ENCODE measurements at regions of chr2 and their contacts with region 1.

Region 1: DNA sequence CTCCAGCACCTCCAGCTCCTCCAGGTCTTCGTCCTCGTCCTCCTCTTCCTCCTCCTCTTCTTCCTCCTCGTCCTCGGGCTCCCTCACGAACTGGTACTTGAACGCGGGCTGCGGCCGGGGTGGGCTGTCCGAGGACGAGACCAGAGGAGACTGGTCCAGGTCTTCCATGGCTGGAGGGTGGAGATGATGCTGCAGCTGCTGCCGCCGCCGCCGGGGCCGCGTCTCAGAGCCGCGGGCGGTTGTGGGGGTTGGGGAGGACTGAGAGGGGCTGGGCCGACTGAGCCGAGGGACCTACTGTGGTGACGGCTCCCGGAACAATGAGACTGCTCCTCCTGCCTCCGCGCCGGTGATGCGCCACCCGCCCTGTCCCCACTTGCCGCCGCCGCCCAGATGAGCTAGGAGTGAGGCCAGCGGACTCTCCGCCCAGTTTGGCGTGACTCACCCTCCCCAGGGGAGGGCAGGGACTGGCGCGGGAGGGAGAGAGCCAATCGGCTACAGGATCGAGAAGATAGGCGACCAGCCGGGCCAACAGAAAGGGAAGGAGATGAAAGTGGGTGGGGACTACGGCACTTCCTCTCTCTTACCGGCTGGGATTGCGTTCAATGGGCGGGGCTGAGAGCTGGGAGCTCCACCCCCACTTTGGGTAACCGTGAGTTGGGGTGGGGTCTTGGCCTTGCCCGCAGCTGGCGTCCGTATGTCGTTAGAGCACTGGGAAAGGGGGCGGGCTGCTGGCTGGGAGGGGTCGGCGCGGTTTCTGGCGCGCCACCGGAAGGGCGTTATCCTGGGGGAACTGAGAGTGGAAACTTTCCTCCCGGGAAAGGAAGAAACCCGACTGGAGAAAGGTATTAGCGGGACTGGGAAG is at the start of gene RTN4:
- DNase-seq: peak; percentile 99
- H3K4me3 Mint-ChIP-seq: peak within 1 kb of the TSS; percentile 100
- H3K27ac Mint-ChIP-seq: peak within 1 kb of the TSS; percentile 99
- H3K4me1 Mint-ChIP-seq: peaks cover 59% of the 10 kb centered on the region
- H3K27me3 Mint-ChIP-seq: no peaks in the 10 kb centered on the region
- total RNA-seq, gene RTN4: 90.1 to 92.4 TPM

Region 2: GRCh38 chr2:54566896-54567295 is 483.5 kb before region 1 on chr2:
- CTCF ChIA-PET with region 1: no interaction called
- POLR2A ChIA-PET with region 1: no interaction called
- DNase-seq: no peak
- H3K4me3 Mint-ChIP-seq: no peak overlapping the region
- H3K27ac Mint-ChIP-seq: no peak overlapping the region
- H3K4me1 Mint-ChIP-seq: peaks cover 79% of the 10 kb centered on the region
- H3K27me3 Mint-ChIP-seq: no peaks in the 10 kb centered on the region

Region 3: GRCh38 chr2:54924121-54924520 is 126.2 kb before region 1 on chr2:
- CTCF ChIA-PET with region 1: no interaction called
- POLR2A ChIA-PET with region 1: no interaction called
- DNase-seq: no peak
- H3K4me3 Mint-ChIP-seq: no peak overlapping the region
- H3K27ac Mint-ChIP-seq: no peak overlapping the region
- H3K4me1 Mint-ChIP-seq: peaks cover 4% of the 10 kb centered on the region
- H3K27me3 Mint-ChIP-seq: peaks cover 10% of the 10 kb centered on the region

Region 4: GRCh38 chr2:54997826-54998225 is 52.5 kb before region 1 on chr2:
- CTCF ChIA-PET with region 1: no interaction called
- POLR2A ChIA-PET with region 1: no interaction called
- DNase-seq: no peak
- H3K4me3 Mint-ChIP-seq: no peak overlapping the region
- H3K27ac Mint-ChIP-seq: no peak overlapping the region
- H3K4me1 Mint-ChIP-seq: peaks cover 12% of the 10 kb centered on the region
- H3K27me3 Mint-ChIP-seq: no peaks in the 10 kb centered on the region

Region 5: GRCh38 chr2:55010149-55010591 is 40.2 kb before region 1 on chr2:
- CTCF ChIA-PET with region 1: interaction called, 8 read pairs
- POLR2A ChIA-PET with region 1: interaction called, 24 read pairs
- DNase-seq: peak; percentile 56
- H3K4me3 Mint-ChIP-seq: peak overlapping the region; percentile 78
- H3K27ac Mint-ChIP-seq: peak overlapping the region; percentile 76
- H3K4me1 Mint-ChIP-seq: peaks cover 46% of the 10 kb centered on the region
- H3K27me3 Mint-ChIP-seq: no peaks in the 10 kb centered on the region

Region 6: DNA sequence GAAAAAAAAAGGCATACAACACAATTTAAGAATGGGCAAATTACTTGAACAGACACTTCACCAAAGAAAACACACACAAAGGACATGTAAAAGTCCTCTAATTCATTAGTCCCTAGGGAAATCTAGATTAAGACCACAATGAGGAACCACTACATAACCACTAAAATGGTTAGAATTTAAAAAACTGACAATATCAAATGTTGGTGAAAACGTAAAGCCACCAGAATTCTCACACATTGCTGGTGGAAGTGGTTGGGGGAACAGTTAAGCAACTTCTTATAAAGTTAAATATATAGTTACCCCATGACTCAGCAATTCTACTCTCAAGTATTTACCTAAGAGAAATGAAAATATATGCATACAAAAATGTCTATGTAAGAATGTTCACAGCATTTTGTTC is 11.9 kb before region 1 on chr2:
- CTCF ChIA-PET with region 1: interaction called, 12 read pairs
- POLR2A ChIA-PET with region 1: interaction called, 13 read pairs
- DNase-seq: no peak
- H3K4me3 Mint-ChIP-seq: no peak overlapping the region
- H3K27ac Mint-ChIP-seq: no peak overlapping the region
- H3K4me1 Mint-ChIP-seq: peaks cover 35% of the 10 kb centered on the region
- H3K27me3 Mint-ChIP-seq: no peaks in the 10 kb centered on the region

Region 7: GRCh38 chr2:55061523-55062344 is 11.4 kb after region 1 on chr2:
- CTCF ChIA-PET with region 1: interaction called, 5 read pairs
- POLR2A ChIA-PET with region 1: interaction called, 12 read pairs
- DNase-seq: no peak
- H3K4me3 Mint-ChIP-seq: no peak overlapping the region
- H3K27ac Mint-ChIP-seq: no peak overlapping the region
- H3K4me1 Mint-ChIP-seq: peaks cover 7% of the 10 kb centered on the region
- H3K27me3 Mint-ChIP-seq: no peaks in the 10 kb centered on the region

Region 8: GRCh38 chr2:55133467-55134315 is 83.3 kb after region 1 on chr2:
- CTCF ChIA-PET with region 1: interaction called, 5 read pairs
- POLR2A ChIA-PET with region 1: interaction called, 40 read pairs
- DNase-seq: peak; percentile 68
- H3K4me3 Mint-ChIP-seq: peak overlapping the region; percentile 75
- H3K27ac Mint-ChIP-seq: peak overlapping the region; percentile 92
- H3K4me1 Mint-ChIP-seq: peaks cover 21% of the 10 kb centered on the region
- H3K27me3 Mint-ChIP-seq: no peaks in the 10 kb centered on the region

Region 9: GRCh38 chr2:55168221-55169154 is 118.1 kb after region 1 on chr2:
- CTCF ChIA-PET with region 1: interaction called, 21 read pairs
- POLR2A ChIA-PET with region 1: interaction called, 4 read pairs
- DNase-seq: peak; percentile 32
- H3K4me3 Mint-ChIP-seq: no peak overlapping the region
- H3K27ac Mint-ChIP-seq: no peak overlapping the region
- H3K4me1 Mint-ChIP-seq: no peaks in the 10 kb centered on the region
- H3K27me3 Mint-ChIP-seq: no peaks in the 10 kb centered on the region

Measured in activated CD4-positive, alpha-beta memory T cell treated with anti-CD3 and anti-CD28 coated beads, Interleukin-2, amount 10 ng/mL, durations not matched to agents 7 days and 5 days (primary cell).